Sciatic nerve (tissue), 2 donors: ENCODE measurements at regions of chr15 and their contacts with region 1.

Region 1: GRCh38 chr15:91784973-91785709 is 68.4 kb upstream of the SLCO3A1 start:
- DNase-seq: no peak
- ATAC-seq: no peak

Region 2: DNA sequence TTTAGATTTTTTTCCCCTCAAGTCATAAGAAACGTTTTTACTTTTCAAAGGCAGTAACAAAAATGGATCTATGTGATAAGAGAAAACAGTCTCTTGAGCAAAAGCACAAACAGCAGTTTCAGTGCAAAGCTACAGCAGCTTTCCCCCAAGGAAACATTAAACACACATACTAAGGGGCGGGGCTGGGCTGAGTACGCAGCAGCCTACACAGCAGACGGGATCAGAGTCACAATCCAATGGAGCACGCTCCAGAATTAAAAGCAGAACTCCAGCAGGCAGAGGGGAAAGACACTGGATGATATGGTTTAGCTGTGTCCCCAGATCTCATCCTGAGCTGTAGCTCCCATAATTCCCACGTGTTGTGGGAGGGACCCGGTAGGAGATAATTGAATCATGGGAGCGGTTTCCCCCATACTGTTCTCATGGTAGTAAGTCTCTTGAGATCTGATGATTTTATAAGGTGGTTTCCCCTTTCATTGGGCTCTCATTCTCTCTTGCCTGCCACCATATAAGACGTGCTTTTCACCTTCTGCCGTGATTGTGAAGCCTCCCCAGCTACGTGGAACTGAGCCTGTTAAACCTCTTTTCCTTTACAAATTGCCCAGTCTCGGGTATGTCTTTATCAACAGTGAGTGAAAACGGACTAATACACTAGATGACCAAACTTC is 47.9 kb before region 1 on chr15:
- intact Hi-C with region 1: no loop called
- DNase-seq: no peak
- ATAC-seq: no peak

Region 3: DNA sequence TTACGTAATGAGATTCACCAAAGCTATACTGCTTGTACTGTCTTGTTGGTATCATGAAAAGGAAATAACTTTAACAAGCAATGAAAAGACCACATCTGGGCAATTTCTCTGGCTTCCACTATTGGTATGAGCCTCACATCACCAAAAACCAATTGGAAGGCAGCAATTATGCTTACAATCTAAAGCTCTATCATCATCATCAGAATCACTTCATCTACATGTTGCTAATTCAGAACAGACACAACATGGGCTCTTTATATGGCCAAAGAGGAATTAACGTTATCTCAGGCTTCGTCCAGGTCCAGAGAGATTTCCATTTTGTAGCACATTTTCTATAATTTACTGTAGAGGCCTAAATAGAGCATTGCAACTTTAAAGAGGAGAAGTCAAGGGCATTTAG is 31.8 kb after region 1 on chr15:
- intact Hi-C with region 1: loop called (anchors 1 kb)
- DNase-seq: no peak
- ATAC-seq: no peak

Region 4: GRCh38 chr15:91844928-91845327 is 59.8 kb after region 1 on chr15:
- intact Hi-C with region 1: no loop called
- DNase-seq: no peak
- ATAC-seq: no peak